Caco-2 (cell line): ENCODE measurements at regions of chr17 and their contacts with region 1.

Region 1: DNA sequence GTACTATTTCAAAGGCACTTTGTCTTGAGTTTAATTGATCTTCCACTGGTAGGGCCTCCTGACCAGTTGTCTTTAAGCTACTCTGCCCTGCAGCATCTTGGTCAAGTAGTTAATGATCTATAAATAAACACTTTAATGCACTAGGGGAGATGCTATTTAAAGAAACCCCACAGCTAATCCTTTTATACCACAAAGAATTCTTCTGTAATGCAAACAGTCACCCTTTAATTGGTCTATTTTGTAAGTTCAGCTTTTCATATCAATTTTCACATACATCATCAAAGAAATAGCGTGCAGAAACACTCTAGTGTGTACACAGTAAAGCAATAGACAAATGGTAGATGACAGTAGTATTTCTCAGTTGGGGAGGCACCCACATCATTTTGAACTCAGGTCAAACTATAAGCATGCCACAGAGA is 70.3 kb downstream of the PMP22 start:
- DNase-seq: no peak
- H3K4me3 ChIP-seq: no peak overlapping the region
- H3K4me3 Mint-ChIP-seq: no peak overlapping the region
- H3K27ac Mint-ChIP-seq: no peak overlapping the region
- H3K4me1 ChIP-seq: no peaks in the 10 kb centered on the region
- H3K4me1 Mint-ChIP-seq: no peaks in the 10 kb centered on the region
- H3K27me3 ChIP-seq: no peaks in the 10 kb centered on the region
- H3K27me3 Mint-ChIP-seq: peaks cover 2% of the 10 kb centered on the region
- CTCF ChIP-seq: no peak

Region 2: DNA sequence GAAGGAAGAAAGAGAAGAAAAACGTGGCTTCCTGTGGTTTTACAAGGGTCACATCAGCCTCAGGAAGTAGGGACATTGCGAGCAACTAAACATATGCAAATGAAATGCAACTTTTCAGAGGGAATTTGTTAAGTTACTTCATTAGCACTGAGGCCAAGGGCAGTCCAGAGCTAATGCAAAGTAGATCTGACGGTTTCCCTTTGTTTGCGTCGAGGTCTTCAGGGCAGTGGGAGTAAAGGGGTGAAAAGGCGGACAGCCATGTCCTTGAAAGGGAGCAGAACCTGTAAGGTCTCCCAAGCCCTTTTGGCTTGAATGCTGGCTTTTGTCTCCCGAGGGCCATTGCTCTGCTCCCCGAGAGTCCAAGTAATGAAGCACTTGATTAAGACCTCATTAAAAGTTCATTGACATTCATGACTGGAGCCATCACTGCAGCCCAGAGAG is 14.7 kb before region 1 on chr17:
- CTCF ChIA-PET with region 1: no interaction called
- POLR2A ChIA-PET with region 1: no interaction called
- intact Hi-C with region 1: loop called (anchors 1 kb)
- DNase-seq: no peak
- H3K4me3 ChIP-seq: no peak overlapping the region
- H3K4me3 Mint-ChIP-seq: no peak overlapping the region
- H3K27ac Mint-ChIP-seq: no peak overlapping the region
- H3K4me1 ChIP-seq: no peaks in the 10 kb centered on the region
- H3K4me1 Mint-ChIP-seq: no peaks in the 10 kb centered on the region
- H3K27me3 ChIP-seq: no peaks in the 10 kb centered on the region
- H3K27me3 Mint-ChIP-seq: peaks cover 3% of the 10 kb centered on the region
- CTCF ChIP-seq: no peak